AG04450 (cell line): ENCODE measurements at regions of chr11 and their contacts with region 1.

Region 1: DNA sequence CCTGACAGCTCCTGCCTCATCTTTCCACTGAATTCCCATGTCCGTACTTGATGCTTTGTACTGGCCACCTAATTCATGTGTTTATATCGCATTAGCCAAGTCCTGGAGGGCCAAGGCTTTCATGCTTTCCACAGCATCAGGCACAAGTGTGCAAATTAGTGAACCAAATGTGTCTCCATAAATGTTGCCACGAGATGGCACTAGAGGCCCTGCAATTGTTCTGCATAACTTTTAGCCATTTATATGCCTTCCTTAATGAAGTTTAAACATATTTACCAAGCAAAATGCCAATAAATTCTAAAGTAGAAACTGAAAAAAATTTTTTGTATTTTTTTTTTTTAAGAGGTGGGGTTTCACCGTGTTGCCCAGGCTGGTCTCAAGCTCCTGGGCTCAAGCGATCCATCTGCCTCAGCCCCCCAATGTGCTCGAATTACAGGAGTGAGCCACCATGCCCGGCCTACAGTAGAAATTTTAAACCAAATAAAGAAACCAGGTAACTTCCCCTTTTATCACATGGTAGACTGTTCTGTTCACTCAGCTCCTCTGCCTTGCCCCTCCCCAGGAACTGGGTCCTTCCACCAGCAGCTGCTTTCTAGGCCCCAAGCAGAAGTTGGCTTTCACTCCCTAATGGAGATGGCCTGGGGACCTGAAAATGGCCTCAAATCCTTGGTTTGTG is 20.8 kb upstream of the IL18BP start:
- DNase-seq: no peak
- H3K4me3 ChIP-seq: no peak overlapping the region
- H3K27ac ChIP-seq: no peak overlapping the region
- H3K27me3 ChIP-seq: no peaks in the 10 kb centered on the region
- CTCF ChIP-seq: peak; percentile 72

Region 2: DNA sequence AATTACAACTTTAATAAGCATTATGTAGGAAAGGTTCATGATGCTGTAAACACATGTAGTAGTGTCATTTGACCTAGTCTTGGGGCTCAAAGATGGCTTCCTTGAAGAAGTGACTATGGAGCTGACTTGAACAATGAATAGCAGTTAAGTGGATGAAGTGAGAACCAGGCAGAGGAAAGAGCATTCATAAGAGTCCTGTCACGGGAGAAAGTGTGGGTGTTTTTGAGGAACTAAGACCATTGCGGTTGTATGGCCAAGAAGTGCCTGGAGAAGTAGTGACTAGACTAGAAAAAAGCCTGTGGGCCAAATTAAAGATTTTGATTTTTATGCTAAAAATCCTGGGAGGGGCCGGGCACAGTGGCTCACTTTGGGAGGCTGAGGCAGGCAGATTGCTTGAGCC is 13.6 kb after region 1 on chr11:
- CTCF ChIA-PET with region 1: interaction called, 53 read pairs
- POLR2A ChIA-PET with region 1: no interaction called
- DNase-seq: no peak
- H3K4me3 ChIP-seq: no peak overlapping the region
- H3K27ac ChIP-seq: no peak overlapping the region
- H3K27me3 ChIP-seq: no peaks in the 10 kb centered on the region
- CTCF ChIP-seq: no peak

Region 3: DNA sequence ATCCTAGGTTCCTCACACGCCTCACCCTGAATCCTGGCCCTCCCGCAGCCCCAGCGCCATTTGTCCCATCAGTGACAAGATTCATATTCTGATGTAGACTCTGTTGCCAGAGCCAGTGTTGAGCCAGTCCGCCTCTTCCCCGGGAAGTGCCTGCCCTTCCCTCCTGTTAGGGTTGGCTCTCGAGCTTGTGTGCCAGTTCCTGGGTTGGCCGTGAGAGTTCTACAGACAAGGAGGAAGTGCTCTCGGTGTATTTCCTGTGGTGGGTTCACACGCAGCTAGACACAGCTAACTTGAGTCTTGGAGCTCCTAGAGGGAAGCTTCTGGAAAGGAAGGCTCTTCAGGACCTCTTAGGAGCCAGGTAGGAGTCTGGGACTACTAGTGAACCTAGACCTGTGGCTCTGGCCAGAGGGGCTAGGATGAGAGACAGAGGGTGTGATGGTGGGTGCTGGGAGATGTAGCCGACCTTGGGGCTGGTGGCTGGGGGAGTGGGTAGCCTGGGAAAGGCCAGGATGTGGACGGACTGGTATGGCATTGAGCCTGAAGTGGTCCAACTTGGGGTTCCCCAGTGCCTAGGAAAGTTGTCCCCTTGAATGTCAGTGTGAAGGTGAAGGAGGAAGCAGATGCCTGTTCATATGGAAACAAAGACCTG is 20.9 kb after region 1 on chr11 and contains the start of gene IL18BP:
- CTCF ChIA-PET with region 1: interaction called, 18 read pairs
- POLR2A ChIA-PET with region 1: no interaction called
- DNase-seq: no peak
- H3K4me3 ChIP-seq: peak within 1 kb of the TSS; percentile 17; the same call in 1 of the 2 replicates
- H3K27ac ChIP-seq: peak within 1 kb of the TSS; percentile 31
- H3K27me3 ChIP-seq: no peaks in the 10 kb centered on the region
- CTCF ChIP-seq: no peak
- polyA plus RNA-seq, gene IL18BP: 2.2 and 2.5 TPM in 2 replicates

Region 4: DNA sequence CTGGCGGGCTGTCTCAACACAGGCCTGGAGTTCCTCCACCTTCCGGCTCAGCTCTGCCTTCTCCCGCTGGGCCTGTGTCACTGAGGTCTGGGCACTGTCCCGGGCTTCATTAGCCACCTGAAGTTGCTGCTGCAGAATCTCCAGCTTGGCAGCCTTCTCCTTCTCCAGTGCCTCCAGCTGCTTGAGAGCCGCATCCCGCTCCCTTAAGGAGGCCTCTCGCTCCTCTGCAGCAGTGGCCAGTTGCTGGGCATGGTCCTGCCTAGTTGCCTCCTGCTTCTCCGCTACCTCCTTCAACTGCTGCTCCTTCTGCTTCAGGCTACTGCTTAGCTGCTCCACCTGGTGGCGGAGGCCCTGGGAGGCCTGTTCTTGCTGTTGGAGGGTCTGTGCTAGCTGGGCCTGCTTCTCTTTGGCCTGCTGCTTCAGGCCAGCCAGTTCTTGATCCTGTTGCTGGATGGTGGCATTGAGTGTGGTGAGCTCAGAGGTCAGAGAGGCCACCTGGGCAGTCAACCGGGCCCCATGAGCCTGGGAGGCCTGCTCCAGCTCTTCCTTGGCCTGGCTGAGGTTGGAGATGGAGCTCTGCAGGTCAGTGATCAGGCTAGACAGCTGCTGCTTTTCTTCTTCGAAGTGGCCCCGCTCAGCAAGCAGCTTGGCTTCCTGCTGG is 37.8 kb after region 1 on chr11:
- CTCF ChIA-PET with region 1: interaction called, 39 read pairs
- POLR2A ChIA-PET with region 1: no interaction called
- DNase-seq: no peak
- H3K4me3 ChIP-seq: no peak overlapping the region
- H3K27ac ChIP-seq: no peak overlapping the region
- H3K27me3 ChIP-seq: no peaks in the 10 kb centered on the region
- CTCF ChIP-seq: peak; percentile 48

Region 5: GRCh38 chr11:72030472-72031045 is 52.7 kb after region 1 on chr11:
- CTCF ChIA-PET with region 1: interaction called, 20 read pairs
- POLR2A ChIA-PET with region 1: no interaction called
- DNase-seq: no peak
- H3K4me3 ChIP-seq: no peak overlapping the region
- H3K27ac ChIP-seq: no peak overlapping the region
- H3K27me3 ChIP-seq: no peaks in the 10 kb centered on the region
- CTCF ChIP-seq: no peak

Region 6: GRCh38 chr11:72189461-72190275 is 211.8 kb after region 1 on chr11:
- CTCF ChIA-PET with region 1: interaction called, 11 read pairs
- POLR2A ChIA-PET with region 1: no interaction called
- DNase-seq: no peak
- H3K4me3 ChIP-seq: no peak overlapping the region
- H3K27ac ChIP-seq: no peak overlapping the region
- H3K27me3 ChIP-seq: no peaks in the 10 kb centered on the region
- CTCF ChIP-seq: no peak

Region 7: DNA sequence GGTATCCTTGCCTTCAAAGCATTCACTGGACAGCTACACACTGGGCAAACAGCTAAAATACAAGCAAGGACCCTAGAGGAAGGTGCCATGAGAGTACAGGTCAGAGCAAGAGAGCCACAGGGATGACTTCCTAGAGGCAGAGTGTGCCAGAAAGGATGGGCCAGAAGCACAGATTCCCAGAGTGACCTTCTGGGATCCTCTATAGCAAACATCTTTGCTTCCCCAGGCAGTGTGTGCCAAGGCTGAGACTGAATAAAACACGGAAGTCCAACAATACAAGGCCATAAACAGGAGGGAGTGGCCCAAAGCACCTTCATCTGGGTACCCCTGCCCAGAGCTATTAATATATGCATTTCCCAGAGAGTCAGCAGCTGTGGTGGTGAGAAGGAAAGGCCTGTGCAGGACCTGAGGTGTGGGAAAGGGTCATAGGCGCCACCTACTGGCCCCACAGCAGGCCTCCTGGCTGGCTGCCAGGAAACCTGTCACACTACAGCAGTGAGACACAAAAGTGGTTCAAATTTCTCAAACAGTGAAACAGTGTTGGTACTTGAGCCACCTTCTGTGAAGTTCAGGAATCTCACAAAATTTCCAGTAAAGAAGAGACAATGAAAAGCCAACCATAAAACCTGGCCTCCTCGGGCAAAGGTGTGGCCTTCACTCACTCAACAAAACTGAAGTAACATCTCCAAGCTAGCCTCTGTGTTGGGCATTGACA is 436.2 kb after region 1 on chr11:
- CTCF ChIA-PET with region 1: interaction called, 11 read pairs
- POLR2A ChIA-PET with region 1: no interaction called
- DNase-seq: peak; percentile 51
- H3K4me3 ChIP-seq: no peak overlapping the region
- H3K27ac ChIP-seq: no peak overlapping the region
- H3K27me3 ChIP-seq: no peaks in the 10 kb centered on the region
- CTCF ChIP-seq: peak; percentile 78